Mammary epithelial cell (primary cell): ENCODE measurements at regions of chr1 and their contacts with region 1.

Region 1: GRCh38 chr1:220895412-220895946 is 16.2 kb downstream of the HLX start:
- DNase-seq: no peak
- H3K4me3 ChIP-seq: no peak overlapping the region
- H3K27ac ChIP-seq: no peak overlapping the region
- H3K4me1 ChIP-seq: peaks cover 5% of the 10 kb centered on the region
- H3K27me3 ChIP-seq: peaks cover 46% of the 10 kb centered on the region
- CTCF ChIP-seq: no peak

Region 2: DNA sequence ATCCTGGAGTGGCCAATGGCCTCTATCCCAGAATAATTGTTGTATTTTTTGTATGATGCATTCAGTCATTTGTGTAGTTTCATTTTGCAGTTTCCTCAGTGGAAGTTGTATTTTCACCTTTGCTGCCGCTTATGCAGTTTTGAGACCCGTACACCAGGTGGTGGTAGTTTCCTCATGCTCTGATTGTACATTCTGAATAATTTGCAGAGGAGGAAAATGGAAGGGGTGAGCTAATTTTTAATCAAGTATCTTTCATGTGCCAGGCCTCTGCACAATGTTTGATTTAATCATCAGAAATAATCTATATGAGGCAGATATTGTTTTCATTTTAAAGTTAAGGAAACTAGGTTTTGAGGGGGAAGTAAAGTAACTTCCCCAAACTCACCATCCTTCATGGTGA is 13.3 kb after region 1 on chr1:
- CTCF ChIA-PET with region 1: no interaction called
- dilution Hi-C with region 1: no loop called
- in situ Hi-C with region 1: no loop called
- intact Hi-C with region 1: loop called (anchors 1 kb)
- DNase-seq: no peak
- H3K4me3 ChIP-seq: no peak overlapping the region
- H3K27ac ChIP-seq: no peak overlapping the region
- H3K4me1 ChIP-seq: peaks cover 5% of the 10 kb centered on the region
- H3K27me3 ChIP-seq: no peaks in the 10 kb centered on the region
- CTCF ChIP-seq: peak; percentile 47 to 67

Region 3: GRCh38 chr1:220928725-220929300 is 33.3 kb after region 1 on chr1:
- CTCF ChIA-PET with region 1: no interaction called
- dilution Hi-C with region 1: no loop called
- in situ Hi-C with region 1: no loop called
- intact Hi-C with region 1: no loop called
- DNase-seq: no peak
- H3K4me3 ChIP-seq: no peak overlapping the region
- H3K27ac ChIP-seq: no peak overlapping the region
- H3K4me1 ChIP-seq: no peaks in the 10 kb centered on the region
- H3K27me3 ChIP-seq: peaks cover 3% of the 10 kb centered on the region
- CTCF ChIP-seq: no peak